ENCODE measurements at regions of chr2 and their contacts with region 1.

Region 1: DNA sequence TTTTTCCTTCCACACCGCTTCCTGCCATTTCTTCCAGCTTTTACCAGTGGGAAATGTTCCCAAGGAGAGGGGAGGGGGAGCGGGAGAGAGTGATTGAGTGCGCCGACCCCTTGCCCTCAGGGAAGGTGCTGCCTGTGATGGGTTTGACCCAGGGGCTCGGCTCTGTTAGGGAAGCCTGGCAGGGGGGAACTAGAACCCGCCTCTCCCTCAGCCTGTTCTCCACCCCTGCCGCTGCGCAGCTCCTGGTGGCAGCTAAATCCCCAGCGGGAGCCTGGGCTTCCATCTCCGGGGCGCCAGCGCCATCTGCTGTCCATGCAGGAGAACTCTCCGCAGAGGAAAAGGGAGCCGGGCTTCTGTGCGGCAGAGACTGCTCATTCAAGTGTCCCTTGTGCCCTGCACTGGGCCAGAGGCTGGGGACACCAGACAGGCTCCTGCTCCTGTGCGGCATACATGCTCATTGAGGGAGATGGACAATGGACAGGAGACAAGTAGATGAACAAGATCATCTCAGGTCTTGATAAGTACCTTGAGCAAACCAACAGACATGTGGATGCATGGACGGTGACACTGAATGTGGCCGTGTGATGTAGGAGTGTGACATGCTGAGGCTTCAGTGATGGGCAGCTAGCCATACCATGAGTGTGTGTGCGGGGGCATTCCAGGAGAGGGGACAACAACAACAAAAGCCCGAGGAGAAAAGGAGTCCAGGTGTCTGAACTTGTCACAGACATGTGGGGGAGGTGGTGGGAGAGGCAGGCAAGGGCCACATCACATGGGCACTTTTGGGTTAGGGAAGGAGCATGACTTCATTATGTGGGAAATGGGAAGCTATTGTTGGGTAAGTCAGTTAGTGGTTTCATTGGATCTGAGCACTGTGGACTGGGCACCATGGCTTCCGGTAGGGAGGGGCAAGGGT is 13.3 kb downstream of the CHPF start:
- DNase-seq: no peak
- H3K4me3 ChIP-seq: peak overlapping the region; percentile 11; the same call in 1 of the 2 replicates
- H3K27me3 ChIP-seq: peaks cover 13% of the 10 kb centered on the region
- CTCF ChIP-seq: peak; percentile 96

Region 2: GRCh38 chr2:219388127-219388844 is 142.0 kb before region 1 on chr2:
- CTCF ChIA-PET with region 1: interaction called, 18 read pairs
- POLR2A ChIA-PET with region 1: interaction called, 3 read pairs
- DNase-seq: peak; percentile 69
- H3K4me3 ChIP-seq: peak overlapping the region; percentile 42
- H3K27me3 ChIP-seq: no peaks in the 10 kb centered on the region
- CTCF ChIP-seq: peak; percentile 43

Region 3: DNA sequence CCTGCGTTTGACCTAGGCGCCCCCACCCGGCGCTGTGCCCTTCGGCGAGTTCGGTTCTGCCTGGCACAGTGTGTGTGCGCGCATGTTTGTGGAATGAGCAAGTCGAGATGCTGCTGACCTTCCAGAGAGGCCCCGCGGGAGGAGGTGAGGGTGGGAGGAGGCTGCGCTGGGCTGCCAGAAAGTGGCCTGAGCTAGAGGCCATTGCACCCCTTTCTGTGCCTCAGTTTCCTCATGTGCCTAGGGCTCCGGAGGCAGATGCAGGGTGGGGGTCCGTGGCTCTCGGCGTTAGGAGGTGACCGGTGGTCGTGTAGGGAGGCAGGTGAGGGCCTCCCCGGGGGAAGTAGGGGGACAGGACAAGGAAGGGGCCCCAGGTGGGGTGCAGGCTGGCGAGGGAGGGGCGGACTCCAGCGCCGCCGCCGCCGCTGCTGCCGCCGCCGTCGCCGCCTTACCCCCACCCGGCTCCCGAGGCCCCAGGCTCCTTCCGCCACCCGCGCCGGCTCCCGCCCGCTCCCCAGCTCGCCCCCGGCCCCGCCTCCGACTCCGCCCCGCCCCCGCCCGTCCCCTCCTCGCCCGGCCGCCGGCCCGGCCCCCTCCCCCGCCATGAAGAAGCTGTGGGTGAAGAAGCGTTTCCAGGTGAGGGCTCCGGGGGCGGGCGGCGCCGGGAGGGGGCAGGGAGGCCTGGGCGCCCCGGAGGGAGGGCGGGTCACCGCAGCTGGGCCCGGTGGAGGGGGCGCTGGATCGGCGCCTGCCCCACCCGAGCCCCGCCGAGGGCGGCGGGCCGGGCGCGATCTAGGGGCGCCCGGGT is 88.7 kb before region 1 on chr2:
- CTCF ChIA-PET with region 1: interaction called, 12 read pairs
- POLR2A ChIA-PET with region 1: no interaction called
- DNase-seq: no peak
- H3K4me3 ChIP-seq: peak overlapping the region; percentile 68
- H3K27me3 ChIP-seq: no peaks in the 10 kb centered on the region
- CTCF ChIP-seq: no peak

Region 4: GRCh38 chr2:219459460-219460311 is 70.6 kb before region 1 on chr2:
- CTCF ChIA-PET with region 1: interaction called, 12 read pairs
- POLR2A ChIA-PET with region 1: no interaction called
- DNase-seq: no peak
- H3K4me3 ChIP-seq: no peak overlapping the region
- H3K27me3 ChIP-seq: no peaks in the 10 kb centered on the region
- CTCF ChIP-seq: peak; percentile 98

Region 5: GRCh38 chr2:219484343-219485200 is 45.7 kb before region 1 on chr2:
- CTCF ChIA-PET with region 1: interaction called, 13 read pairs
- POLR2A ChIA-PET with region 1: no interaction called
- DNase-seq: no peak
- H3K4me3 ChIP-seq: no peak overlapping the region
- H3K27me3 ChIP-seq: no peaks in the 10 kb centered on the region
- CTCF ChIP-seq: no peak